ENCODE measurements at regions of chr11 and their contacts with region 1.

Region 1: DNA sequence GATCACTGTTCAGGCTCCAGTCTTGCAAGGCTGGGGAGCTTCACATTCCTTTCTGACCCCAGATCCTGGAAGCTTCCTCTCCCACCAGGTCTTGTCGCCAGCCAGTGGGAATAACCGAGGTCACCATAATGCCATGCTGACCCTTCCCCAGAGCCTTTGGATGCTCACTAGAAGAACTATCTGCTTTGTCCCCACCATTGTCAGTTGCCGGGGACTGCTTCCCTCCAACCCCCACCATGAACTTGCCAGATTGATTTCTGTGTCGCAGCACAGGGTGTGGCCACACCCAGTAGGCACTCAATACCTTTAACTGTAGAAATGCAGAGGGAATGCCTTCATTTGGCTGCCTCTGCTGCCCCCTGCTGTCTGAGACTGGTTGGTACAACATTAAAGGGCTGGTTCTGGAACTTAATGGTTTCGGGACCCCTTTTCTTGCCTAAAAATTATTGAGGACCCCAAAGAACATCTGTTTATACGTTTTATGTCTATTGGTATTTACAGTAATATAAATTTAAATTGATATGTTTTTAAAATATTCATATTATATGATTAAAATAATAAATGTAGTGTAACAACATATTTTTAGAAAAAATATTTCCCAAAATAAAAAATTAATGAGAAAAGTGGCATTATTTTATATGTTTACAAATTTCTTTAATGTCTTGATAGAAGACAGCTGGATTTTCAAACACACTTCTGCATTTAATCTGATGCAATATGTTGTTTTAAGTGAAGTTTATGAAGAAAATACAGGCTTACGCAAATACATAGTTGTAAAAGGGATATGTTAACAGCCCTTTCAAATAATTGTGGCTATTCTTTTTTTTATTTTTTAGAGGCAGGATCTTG is 6.7 kb upstream of the GDPD5 start:
- DNase-seq: peak; percentile 65 to 86 (median 81)
- H3K4me3 ChIP-seq: no peak overlapping the region
- H3K27ac ChIP-seq: no peak overlapping the region
- H3K4me1 ChIP-seq: peaks cover 3 to 25% (median 22%) of the 10 kb centered on the region in 4 experiments
- H3K27me3 ChIP-seq: no peaks in the 10 kb centered on the region

Region 2: GRCh38 chr11:75406338-75406777 is 126.1 kb before region 1 on chr11:
- CTCF ChIA-PET with region 1: interaction called, 12 read pairs
- POLR2A ChIA-PET with region 1: no interaction called
- DNase-seq: peak; percentile 65 to 87 (median 85)
- H3K4me3 ChIP-seq: no peak overlapping the region
- H3K27ac ChIP-seq: peak overlapping the region in 1 of 2 experiments; percentile 9
- H3K4me1 ChIP-seq: peaks cover 10 to 37% (median 24%) of the 10 kb centered on the region in 4 experiments
- H3K27me3 ChIP-seq: no peaks in the 10 kb centered on the region

Region 3: GRCh38 chr11:75450826-75451821 is 81.3 kb before region 1 on chr11:
- CTCF ChIA-PET with region 1: interaction called, 229 read pairs
- POLR2A ChIA-PET with region 1: no interaction called
- DNase-seq: peak in 1 of 3 donors; percentile 15
- H3K4me3 ChIP-seq: no peak overlapping the region
- H3K27ac ChIP-seq: no peak overlapping the region
- H3K4me1 ChIP-seq: no peaks in the 10 kb centered on the region
- H3K27me3 ChIP-seq: no peaks in the 10 kb centered on the region

Region 4: DNA sequence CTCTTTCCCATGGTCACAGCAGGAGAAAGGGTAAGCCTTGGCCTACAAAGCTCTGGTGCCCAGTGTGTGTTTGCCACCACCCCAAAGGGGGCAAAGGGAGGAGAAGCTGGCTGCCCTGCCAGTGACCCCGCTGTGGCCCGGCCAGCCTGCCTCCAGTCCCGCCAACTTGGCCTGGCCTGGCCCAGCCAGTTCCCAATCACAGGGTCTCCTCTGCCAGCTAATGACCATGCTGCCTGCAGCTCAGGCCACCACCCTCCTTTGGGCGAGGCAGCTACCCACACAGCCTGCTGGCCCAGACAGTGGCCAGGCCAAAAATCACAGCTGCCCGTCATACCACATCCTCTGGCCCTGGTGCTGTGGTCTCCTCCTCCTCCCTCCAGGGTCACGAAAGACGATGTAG is 11.7 kb before region 1 on chr11:
- CTCF ChIA-PET with region 1: interaction called, 58 read pairs
- POLR2A ChIA-PET with region 1: no interaction called
- DNase-seq: no peak
- H3K4me3 ChIP-seq: no peak overlapping the region
- H3K27ac ChIP-seq: no peak overlapping the region
- H3K4me1 ChIP-seq: peaks cover 0 to 39% (median 31%) of the 10 kb centered on the region in 4 experiments
- H3K27me3 ChIP-seq: peaks cover 0 to 22% (median 11%) of the 10 kb centered on the region in 5 experiments

Region 5: GRCh38 chr11:75562048-75562835 is 29.8 kb after region 1 on chr11 and contains the start of gene SERPINH1:
- CTCF ChIA-PET with region 1: interaction called, 13 read pairs
- POLR2A ChIA-PET with region 1: no interaction called
- DNase-seq: peak in 2 of 3 donors; percentile 44 to 54
- H3K4me3 ChIP-seq: peak within 1 kb of the TSS; percentile 80 to 89 (median 85)
- H3K27ac ChIP-seq: peak within 1 kb of the TSS in 1 of 2 experiments; percentile 75
- H3K4me1 ChIP-seq: peaks cover 0 to 49% (median 27%) of the 10 kb centered on the region in 4 experiments
- H3K27me3 ChIP-seq: no peaks in the 10 kb centered on the region

Region 6: DNA sequence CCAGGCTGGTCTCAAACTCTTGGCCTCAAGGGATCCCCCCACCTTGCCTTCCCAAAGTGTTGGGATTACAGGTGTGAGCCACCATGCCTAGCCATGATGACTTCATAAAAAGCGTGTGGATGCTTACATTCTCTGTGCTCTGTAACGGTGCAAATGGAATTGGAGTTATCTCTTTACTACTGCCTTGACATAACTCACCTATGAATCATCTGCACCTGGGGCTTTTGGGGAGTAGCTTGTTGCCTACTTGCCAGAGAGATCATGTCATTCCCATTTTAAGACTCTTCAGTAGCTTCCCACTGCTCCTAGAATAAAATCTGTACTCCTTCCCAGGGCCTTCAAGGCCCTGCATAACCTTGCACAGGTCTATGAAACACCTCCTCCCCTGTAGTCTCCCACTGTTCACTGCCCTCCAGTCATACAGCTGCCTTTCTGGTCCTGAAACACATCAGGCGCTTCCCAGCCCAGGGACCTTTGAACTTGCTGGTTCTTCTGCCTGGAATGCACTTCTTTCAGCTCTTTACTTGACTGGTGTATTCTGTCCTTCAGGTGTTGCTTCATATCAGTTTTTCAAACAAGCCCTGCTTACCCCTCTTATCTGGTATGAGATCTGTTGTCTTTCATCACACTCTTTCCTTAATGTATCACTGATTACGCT is 165.6 kb after region 1 on chr11:
- CTCF ChIA-PET with region 1: no interaction called
- POLR2A ChIA-PET with region 1: no interaction called
- DNase-seq: no peak
- H3K4me3 ChIP-seq: no peak overlapping the region
- H3K27ac ChIP-seq: no peak overlapping the region
- H3K4me1 ChIP-seq: no peaks in the 10 kb centered on the region
- H3K27me3 ChIP-seq: peaks cover 0 to 6% (median 0%) of the 10 kb centered on the region in 5 experiments

Region 7: GRCh38 chr11:75717608-75718418 is 185.4 kb after region 1 on chr11 and contains the start of gene MOGAT2:
- CTCF ChIA-PET with region 1: no interaction called
- POLR2A ChIA-PET with region 1: no interaction called
- DNase-seq: peak in 1 of 3 donors; percentile 12
- H3K4me3 ChIP-seq: no peak within 1 kb of the TSS
- H3K27ac ChIP-seq: no peak within 1 kb of the TSS
- H3K4me1 ChIP-seq: peaks cover 0 to 11% (median 8%) of the 10 kb centered on the region in 4 experiments
- H3K27me3 ChIP-seq: no peaks in the 10 kb centered on the region

Region 8: DNA sequence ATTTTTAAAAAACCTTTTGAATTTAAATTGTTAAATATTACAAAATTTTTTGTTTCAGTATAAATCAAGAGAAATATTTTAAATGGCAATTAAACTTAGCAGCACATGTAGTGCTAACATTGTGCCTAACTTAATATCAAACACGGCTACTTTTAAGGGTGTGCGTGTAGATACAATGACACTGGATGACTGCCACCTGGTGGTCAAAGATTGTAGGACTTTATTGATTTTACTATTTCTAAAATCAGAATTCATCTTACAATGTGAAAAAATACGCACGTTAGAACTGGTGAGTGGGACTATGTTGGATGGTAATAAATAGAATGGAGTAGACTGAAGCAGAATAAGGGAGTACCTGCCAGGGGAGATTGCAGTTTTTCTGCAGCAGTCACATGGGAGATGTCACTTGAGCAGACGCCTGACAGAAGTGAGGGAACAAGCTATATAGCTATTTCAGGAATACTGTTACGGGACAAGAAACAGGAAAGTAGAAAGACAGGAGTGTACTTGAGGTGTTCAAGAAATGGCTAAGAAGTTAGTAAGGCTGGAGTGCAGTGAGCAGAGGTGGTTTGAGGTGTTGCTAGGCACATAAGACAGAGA is 335.5 kb after region 1 on chr11:
- CTCF ChIA-PET with region 1: no interaction called
- POLR2A ChIA-PET with region 1: no interaction called
- DNase-seq: peak; percentile 65 to 79 (median 72)
- H3K4me3 ChIP-seq: no peak overlapping the region
- H3K27ac ChIP-seq: no peak overlapping the region
- H3K4me1 ChIP-seq: peaks cover 15 to 41% (median 31%) of the 10 kb centered on the region in 4 experiments
- H3K27me3 ChIP-seq: no peaks in the 10 kb centered on the region